ENCODE measurements at regions of chr5 and their contacts with region 1.

Region 1: GRCh38 chr5:42889311-42889933 is 77.7 kb upstream of the SELENOP start:
- DNase-seq: peak in 8 of 9 donors; percentile 24 to 56 (median 49)
- ATAC-seq: peak; percentile 87
- H3K4me3 ChIP-seq: no peak overlapping the region
- H3K4me3 Mint-ChIP-seq: no peak overlapping the region
- H3K27ac ChIP-seq: no peak overlapping the region
- H3K27ac Mint-ChIP-seq: no peak overlapping the region
- H3K4me1 ChIP-seq: no peaks in the 10 kb centered on the region
- H3K4me1 Mint-ChIP-seq: no peaks in the 10 kb centered on the region
- H3K27me3 ChIP-seq: no peaks in the 10 kb centered on the region
- H3K27me3 Mint-ChIP-seq: peaks cover 3 to 29% (median 6%) of the 10 kb centered on the region in 5 donors

Region 2: GRCh38 chr5:42005561-42006153 is 883.8 kb before region 1 on chr5:
- CTCF ChIA-PET with region 1: interaction called, 3 read pairs
- POLR2A ChIA-PET with region 1: no interaction called
- intact Hi-C with region 1: loop called in 1 of 2 experiments (anchors 1 kb)
- DNase-seq: peak in 5 of 9 donors; percentile 1 to 9 (median 6)
- ATAC-seq: no peak
- H3K4me3 ChIP-seq: no peak overlapping the region
- H3K4me3 Mint-ChIP-seq: no peak overlapping the region
- H3K27ac ChIP-seq: no peak overlapping the region
- H3K27ac Mint-ChIP-seq: no peak overlapping the region
- H3K4me1 ChIP-seq: no peaks in the 10 kb centered on the region
- H3K4me1 Mint-ChIP-seq: no peaks in the 10 kb centered on the region
- H3K27me3 ChIP-seq: no peaks in the 10 kb centered on the region
- H3K27me3 Mint-ChIP-seq: peaks cover 4 to 14% (median 6%) of the 10 kb centered on the region in 5 donors

Region 3: DNA sequence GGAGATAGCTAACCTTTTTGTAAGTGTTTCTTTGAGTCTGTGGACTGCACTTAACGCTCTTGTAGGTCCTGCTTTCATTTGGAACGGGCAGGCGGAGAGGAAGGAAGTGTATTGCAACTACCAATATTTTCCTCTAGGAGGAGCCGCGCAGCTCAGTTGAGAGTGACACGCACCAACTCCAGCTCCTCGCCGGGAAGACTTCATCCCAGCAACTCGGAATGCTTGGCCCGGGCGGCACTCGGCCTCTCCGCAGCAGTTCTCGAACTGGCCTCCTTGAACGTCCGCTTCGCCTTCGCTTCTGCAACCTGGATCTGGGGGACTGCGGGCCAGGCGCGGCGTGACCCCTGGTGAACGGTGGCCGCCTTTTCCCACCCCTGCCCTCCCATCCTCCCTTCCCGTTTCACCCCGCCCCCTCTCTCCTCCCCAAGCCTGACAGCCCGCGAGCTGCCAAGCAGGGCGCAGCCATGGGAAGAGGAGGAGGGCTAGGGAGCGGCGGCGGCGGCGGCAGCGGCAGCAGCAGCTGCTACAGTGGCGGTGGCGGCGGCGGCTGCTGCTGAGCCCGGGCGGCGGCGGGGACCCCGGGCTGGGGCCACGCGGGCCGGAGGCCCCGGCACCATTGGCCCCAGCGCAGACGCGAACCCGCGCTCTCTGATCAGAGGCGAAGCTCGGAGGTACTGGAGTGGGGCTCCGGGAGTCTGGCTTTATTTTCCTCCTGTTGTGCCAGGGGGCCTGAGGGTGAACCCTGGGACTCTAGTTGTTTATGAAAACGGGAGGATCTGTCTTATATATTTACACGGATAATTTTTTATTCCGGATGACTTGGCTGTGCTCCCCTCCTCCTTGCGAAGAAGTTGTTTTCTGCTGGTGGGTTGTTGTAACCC is 465.9 kb before region 1 on chr5 and contains the start of gene GHR:
- CTCF ChIA-PET with region 1: no interaction called
- POLR2A ChIA-PET with region 1: no interaction called
- intact Hi-C with region 1: loop called in 1 of 2 experiments (anchors 1 kb)
- DNase-seq: peak in 2 of 9 donors; percentile 4 to 21
- ATAC-seq: peak; percentile 61
- H3K4me3 ChIP-seq: no peak within 1 kb of the TSS
- H3K4me3 Mint-ChIP-seq: peak within 1 kb of the TSS in 1 of 10 donors; percentile 9
- H3K27ac ChIP-seq: no peak within 1 kb of the TSS
- H3K27ac Mint-ChIP-seq: no peak within 1 kb of the TSS
- H3K4me1 ChIP-seq: no peaks in the 10 kb centered on the region
- H3K4me1 Mint-ChIP-seq: no peaks in the 10 kb centered on the region
- H3K27me3 ChIP-seq: no peaks in the 10 kb centered on the region
- H3K27me3 Mint-ChIP-seq: peaks cover 11 to 42% (median 26%) of the 10 kb centered on the region in 5 donors
- total RNA-seq, gene GHR: not detected

Region 4: GRCh38 chr5:42583322-42583721 is 306.1 kb before region 1 on chr5:
- CTCF ChIA-PET with region 1: no interaction called
- POLR2A ChIA-PET with region 1: no interaction called
- intact Hi-C with region 1: loop called (anchors 2 to 10 kb)
- DNase-seq: peak in 5 of 9 donors; percentile 8 to 24 (median 12)
- ATAC-seq: peak; percentile 68
- H3K4me3 ChIP-seq: no peak overlapping the region
- H3K4me3 Mint-ChIP-seq: no peak overlapping the region
- H3K27ac ChIP-seq: no peak overlapping the region
- H3K27ac Mint-ChIP-seq: no peak overlapping the region
- H3K4me1 ChIP-seq: no peaks in the 10 kb centered on the region
- H3K4me1 Mint-ChIP-seq: peaks cover 0 to 6% (median 2%) of the 10 kb centered on the region in 7 donors
- H3K27me3 ChIP-seq: peaks cover 0 to 6% of the 10 kb centered on the region in 2 donors
- H3K27me3 Mint-ChIP-seq: peaks cover 15 to 39% (median 21%) of the 10 kb centered on the region in 5 donors

Region 5: GRCh38 chr5:42879291-42879690 is 10.1 kb before region 1 on chr5:
- CTCF ChIA-PET with region 1: interaction called, 13 read pairs
- POLR2A ChIA-PET with region 1: no interaction called
- intact Hi-C with region 1: no loop called
- DNase-seq: no peak
- ATAC-seq: no peak
- H3K4me3 ChIP-seq: no peak overlapping the region
- H3K4me3 Mint-ChIP-seq: no peak overlapping the region
- H3K27ac ChIP-seq: no peak overlapping the region
- H3K27ac Mint-ChIP-seq: no peak overlapping the region
- H3K4me1 ChIP-seq: no peaks in the 10 kb centered on the region
- H3K4me1 Mint-ChIP-seq: peaks cover 0 to 12% (median 7%) of the 10 kb centered on the region in 7 donors
- H3K27me3 ChIP-seq: no peaks in the 10 kb centered on the region
- H3K27me3 Mint-ChIP-seq: peaks cover 0 to 10% (median 0%) of the 10 kb centered on the region in 5 donors